B cell (primary cell): ENCODE measurements at regions of chr3 and their contacts with region 1.

Region 1: GRCh38 chr3:71389911-71390573 is 193.5 kb downstream of the FOXP1 start:
- DNase-seq: peak; percentile 57
- ATAC-seq: peak; percentile 11
- H3K4me3 ChIP-seq: peak overlapping the region; percentile 27 to 40 (median 33)
- H3K4me3 Mint-ChIP-seq: peak overlapping the region; percentile 84
- H3K27ac ChIP-seq: peak overlapping the region; percentile 95 to 99
- H3K27ac Mint-ChIP-seq: peak overlapping the region; percentile 98
- H3K4me1 ChIP-seq: peaks cover 84 to 90% of the 10 kb centered on the region in 2 donors
- H3K4me1 Mint-ChIP-seq: peaks cover 70% of the 10 kb centered on the region
- H3K27me3 ChIP-seq: no peaks in the 10 kb centered on the region
- H3K27me3 Mint-ChIP-seq: no peaks in the 10 kb centered on the region
- CTCF ChIP-seq: no peak

Region 2: DNA sequence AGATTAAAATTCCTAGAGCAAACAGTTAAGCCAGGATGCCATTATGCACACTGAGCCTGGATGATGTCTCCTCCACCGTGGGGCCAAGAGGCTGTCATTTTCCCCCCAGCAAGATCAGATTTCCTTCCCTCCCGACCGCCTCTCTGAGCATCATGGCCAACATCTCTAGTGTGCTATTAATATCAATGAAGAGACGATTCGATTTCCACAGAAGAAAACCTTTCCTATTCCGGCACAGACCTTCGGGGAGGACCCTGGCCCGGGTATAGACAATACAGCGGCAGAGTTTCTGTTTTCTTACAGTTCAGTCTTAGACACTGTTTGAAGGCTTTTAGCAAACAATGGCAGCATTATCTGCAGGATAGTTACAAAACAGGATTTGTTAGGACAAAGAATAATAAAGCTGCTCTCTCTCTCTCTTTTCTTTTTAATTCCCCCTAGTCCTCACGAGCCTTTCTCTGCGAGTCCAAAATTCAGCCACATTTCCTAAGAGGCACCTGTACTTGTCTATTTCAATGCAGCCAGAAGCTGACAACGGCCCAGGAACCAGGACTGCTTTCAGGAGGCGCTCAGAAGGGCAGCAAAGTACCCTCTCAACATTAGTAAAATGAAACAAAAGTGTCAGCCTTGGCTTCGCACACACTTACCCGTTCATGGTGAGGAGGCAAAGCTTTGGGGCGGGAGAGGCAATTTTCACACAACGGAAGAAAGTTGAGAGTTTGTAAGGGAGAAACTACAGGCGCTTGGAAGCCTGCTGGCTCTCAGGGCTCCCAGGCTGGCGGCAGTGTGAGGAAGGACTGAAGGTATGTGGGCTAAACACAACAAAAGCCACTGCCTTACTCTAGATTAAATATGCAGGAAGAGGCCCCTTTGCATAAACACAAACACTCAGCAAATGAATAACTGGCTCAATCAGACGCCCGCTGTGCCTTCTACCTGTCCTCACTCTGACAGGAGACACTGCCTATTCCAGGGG is 84.5 kb before region 1 on chr3:
- CTCF ChIA-PET with region 1: no interaction called
- POLR2A ChIA-PET with region 1: no interaction called
- intact Hi-C with region 1: loop called (anchors 5 kb)
- DNase-seq: peak; percentile 49
- ATAC-seq: peak; percentile 60
- H3K4me3 ChIP-seq: peak overlapping the region; percentile 50 to 85 (median 67)
- H3K4me3 Mint-ChIP-seq: peak overlapping the region; percentile 88
- H3K27ac ChIP-seq: peak overlapping the region; percentile 70 to 84
- H3K27ac Mint-ChIP-seq: peak overlapping the region; percentile 94
- H3K4me1 ChIP-seq: peaks cover 47 to 57% of the 10 kb centered on the region in 2 donors
- H3K4me1 Mint-ChIP-seq: peaks cover 77% of the 10 kb centered on the region
- H3K27me3 ChIP-seq: no peaks in the 10 kb centered on the region
- H3K27me3 Mint-ChIP-seq: no peaks in the 10 kb centered on the region
- CTCF ChIP-seq: no peak

Region 3: DNA sequence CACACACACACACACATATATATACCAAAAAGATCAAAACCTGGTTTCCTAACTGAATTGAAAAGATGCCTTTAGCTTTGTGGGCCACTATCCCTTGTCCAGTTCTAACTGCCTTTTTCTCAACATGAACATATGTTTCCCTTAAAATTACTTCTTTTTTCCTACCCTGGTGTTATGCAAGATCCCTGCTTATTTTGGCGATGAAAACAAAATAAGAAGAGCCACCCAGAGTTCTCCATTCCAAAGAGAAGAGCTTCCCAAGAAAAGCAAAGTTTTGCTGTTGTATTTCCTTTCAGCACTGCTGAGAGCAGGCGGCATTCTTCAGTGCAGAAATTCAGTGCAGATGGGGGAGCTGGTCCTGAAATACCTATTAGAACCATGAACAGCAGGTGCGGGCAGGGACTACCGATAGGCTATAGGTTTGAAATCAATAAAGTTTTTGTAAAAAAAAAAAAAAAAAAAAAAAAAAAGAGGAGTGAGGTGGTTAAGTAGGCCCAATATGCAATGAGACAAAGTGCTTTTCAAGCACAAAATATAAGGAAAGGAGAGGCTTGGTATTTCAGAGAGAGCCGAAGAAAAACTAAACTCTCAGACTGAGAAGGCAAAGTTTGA is 44.5 kb before region 1 on chr3:
- CTCF ChIA-PET with region 1: no interaction called
- POLR2A ChIA-PET with region 1: no interaction called
- intact Hi-C with region 1: no loop called
- DNase-seq: peak; percentile 41
- ATAC-seq: no peak
- H3K4me3 ChIP-seq: no peak overlapping the region
- H3K4me3 Mint-ChIP-seq: no peak overlapping the region
- H3K27ac ChIP-seq: no peak overlapping the region
- H3K27ac Mint-ChIP-seq: peak overlapping the region; percentile 63
- H3K4me1 ChIP-seq: peaks cover 11 to 25% of the 10 kb centered on the region in 2 donors
- H3K4me1 Mint-ChIP-seq: peaks cover 55% of the 10 kb centered on the region
- H3K27me3 ChIP-seq: no peaks in the 10 kb centered on the region
- H3K27me3 Mint-ChIP-seq: no peaks in the 10 kb centered on the region
- CTCF ChIP-seq: no peak

Region 4: GRCh38 chr3:71376911-71377310 is 13.1 kb before region 1 on chr3:
- CTCF ChIA-PET with region 1: no interaction called
- POLR2A ChIA-PET with region 1: no interaction called
- intact Hi-C with region 1: loop called (anchors 1 kb)
- DNase-seq: peak; percentile 68
- ATAC-seq: peak; percentile 88
- H3K4me3 ChIP-seq: peak overlapping the region in 1 of 5 experiments; percentile 32
- H3K4me3 Mint-ChIP-seq: peak overlapping the region; percentile 58
- H3K27ac ChIP-seq: peak overlapping the region; percentile 70 to 83
- H3K27ac Mint-ChIP-seq: peak overlapping the region; percentile 79
- H3K4me1 ChIP-seq: peaks cover 44 to 73% of the 10 kb centered on the region in 2 donors
- H3K4me1 Mint-ChIP-seq: peaks cover 71% of the 10 kb centered on the region
- H3K27me3 ChIP-seq: no peaks in the 10 kb centered on the region
- H3K27me3 Mint-ChIP-seq: no peaks in the 10 kb centered on the region
- CTCF ChIP-seq: no peak

Region 5: DNA sequence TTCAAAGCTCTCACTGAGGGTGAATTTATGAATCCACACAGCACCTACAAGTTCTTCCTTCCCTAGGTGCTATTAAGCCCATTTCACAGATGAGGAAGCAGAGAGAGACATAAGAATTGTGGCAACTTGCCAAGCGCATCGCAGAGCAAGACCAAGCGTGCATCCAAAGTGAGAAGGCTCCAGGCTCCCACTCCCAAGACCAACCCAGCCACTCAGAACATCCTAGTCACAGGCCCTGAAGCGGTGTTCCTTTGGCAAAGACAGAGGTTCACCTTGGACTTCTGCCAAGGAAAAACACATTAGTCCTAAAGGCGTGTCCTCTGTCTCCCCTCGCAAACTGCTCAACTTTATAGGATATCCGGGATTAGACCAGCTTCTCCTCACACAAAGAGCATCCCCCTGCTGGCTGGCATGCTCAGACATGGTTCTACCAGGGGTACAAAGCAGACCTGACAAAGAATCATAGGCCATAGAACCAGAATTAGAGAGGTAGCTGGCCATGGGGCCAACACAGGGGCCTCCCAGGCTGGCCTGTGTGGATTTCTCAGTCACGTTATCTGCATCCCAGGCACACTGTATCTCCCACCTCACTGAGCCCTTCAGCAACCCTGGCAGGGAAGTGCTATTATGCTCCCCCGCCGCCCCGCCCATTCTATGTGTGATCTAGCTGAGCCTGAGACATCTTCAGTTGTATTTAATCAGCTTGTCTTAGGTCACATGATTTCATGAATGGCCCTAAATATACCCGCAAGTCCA is 33.3 kb after region 1 on chr3:
- CTCF ChIA-PET with region 1: interaction called, 39 read pairs
- POLR2A ChIA-PET with region 1: interaction called, 8 read pairs
- intact Hi-C with region 1: loop called (anchors 2 kb)
- DNase-seq: no peak
- ATAC-seq: no peak
- H3K4me3 ChIP-seq: no peak overlapping the region
- H3K4me3 Mint-ChIP-seq: peak overlapping the region; percentile 81
- H3K27ac ChIP-seq: peak overlapping the region; percentile 98
- H3K27ac Mint-ChIP-seq: peak overlapping the region; percentile 99
- H3K4me1 ChIP-seq: peaks cover 79 to 82% of the 10 kb centered on the region in 2 donors
- H3K4me1 Mint-ChIP-seq: peaks cover 84% of the 10 kb centered on the region
- H3K27me3 ChIP-seq: no peaks in the 10 kb centered on the region
- H3K27me3 Mint-ChIP-seq: no peaks in the 10 kb centered on the region
- CTCF ChIP-seq: no peak

Region 6: DNA sequence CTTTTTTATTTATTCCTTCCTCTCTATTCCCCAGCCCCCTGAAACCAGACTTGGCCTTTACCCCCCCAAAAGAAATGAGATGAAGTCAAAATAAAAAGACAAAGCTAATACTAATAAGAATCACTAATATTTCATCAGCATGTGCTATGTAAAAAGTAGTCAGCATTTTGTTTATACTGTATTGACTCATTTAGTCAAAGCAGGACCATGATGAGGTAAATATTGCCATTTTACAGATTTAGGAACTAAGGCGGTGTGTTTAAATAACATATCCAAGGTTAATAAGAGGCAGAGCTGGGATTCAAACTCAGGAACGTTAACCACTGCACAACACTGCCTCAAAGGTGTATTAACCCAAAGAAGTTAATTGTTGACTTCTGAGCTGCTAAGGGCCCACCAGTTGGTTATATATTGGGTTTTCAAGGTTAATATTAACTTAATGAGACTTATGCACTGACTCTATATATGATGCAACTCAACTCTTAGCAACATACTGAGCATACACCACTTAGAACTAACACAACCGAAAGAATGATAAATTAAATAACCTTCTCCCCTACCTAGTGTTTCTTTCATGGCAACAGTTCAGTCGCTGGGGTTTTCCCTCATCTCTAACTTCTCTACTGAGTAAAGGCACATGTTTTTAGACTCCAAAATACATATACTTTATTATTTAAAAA is 158.8 kb after region 1 on chr3:
- CTCF ChIA-PET with region 1: no interaction called
- POLR2A ChIA-PET with region 1: no interaction called
- intact Hi-C with region 1: no loop called
- DNase-seq: no peak
- ATAC-seq: no peak
- H3K4me3 ChIP-seq: no peak overlapping the region
- H3K4me3 Mint-ChIP-seq: no peak overlapping the region
- H3K27ac ChIP-seq: no peak overlapping the region
- H3K27ac Mint-ChIP-seq: no peak overlapping the region
- H3K4me1 ChIP-seq: peaks cover 4 to 23% of the 10 kb centered on the region in 2 donors
- H3K4me1 Mint-ChIP-seq: peaks cover 22% of the 10 kb centered on the region
- H3K27me3 ChIP-seq: no peaks in the 10 kb centered on the region
- H3K27me3 Mint-ChIP-seq: peaks cover 3% of the 10 kb centered on the region
- CTCF ChIP-seq: no peak